ENCODE measurements at regions of chr7 and their contacts with region 1.

Region 1: DNA sequence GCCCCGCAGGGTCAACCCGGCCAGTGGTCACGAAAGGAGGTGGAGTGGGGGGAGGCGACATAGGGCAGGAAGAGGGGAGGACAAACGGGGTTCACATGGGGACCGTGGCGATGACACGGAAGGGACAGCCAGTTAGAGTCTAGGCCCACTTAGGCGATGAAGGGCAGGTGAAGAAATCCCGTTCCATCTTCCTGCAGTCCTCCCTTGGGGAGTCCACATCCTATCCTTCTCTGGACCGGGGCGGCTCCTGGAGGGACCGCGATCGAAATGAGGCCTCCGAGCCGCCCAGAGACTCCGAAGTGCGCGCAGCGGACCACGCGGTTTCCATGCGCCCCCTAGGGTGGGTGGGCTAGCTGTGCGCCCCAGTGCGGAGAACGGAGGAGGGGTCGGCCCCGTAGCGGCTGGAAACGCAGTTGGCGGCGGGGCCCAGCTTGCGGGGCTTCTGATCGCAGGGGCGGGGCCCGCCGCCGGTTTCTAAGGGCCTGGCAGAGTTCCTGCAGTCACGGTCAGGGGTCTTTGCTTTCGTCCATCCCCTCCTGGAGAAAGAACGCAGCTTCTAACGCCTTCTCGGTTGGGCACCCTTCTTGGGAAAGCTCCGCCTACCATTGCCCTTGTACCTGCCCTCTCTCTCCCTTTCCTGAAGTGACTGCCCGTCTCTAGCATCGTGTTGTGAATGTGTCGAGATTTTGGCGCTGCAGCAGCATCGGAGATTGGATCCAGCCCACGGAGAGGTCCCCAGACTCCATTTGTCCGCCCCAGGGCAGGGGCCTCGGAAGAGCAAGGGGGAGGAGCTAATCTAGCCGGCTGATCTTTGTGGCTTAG is 17.9 kb upstream of the TMEM225B start:
- DNase-seq: peak; percentile 62
- ATAC-seq: peak; percentile 83
- H3K4me3 ChIP-seq: peak overlapping the region; percentile 34 to 75 (median 60)
- H3K4me3 Mint-ChIP-seq: peak overlapping the region; percentile 96
- H3K27ac ChIP-seq: no peak overlapping the region
- H3K27ac Mint-ChIP-seq: peak overlapping the region; percentile 87
- H3K4me1 ChIP-seq: peaks cover 7 to 19% of the 10 kb centered on the region in 2 donors
- H3K4me1 Mint-ChIP-seq: peaks cover 27% of the 10 kb centered on the region
- H3K27me3 ChIP-seq: peaks cover 0 to 3% (median 1%) of the 10 kb centered on the region in 4 experiments
- H3K27me3 Mint-ChIP-seq: peaks cover 9% of the 10 kb centered on the region
- CTCF ChIP-seq: peak; percentile 48

Region 2: DNA sequence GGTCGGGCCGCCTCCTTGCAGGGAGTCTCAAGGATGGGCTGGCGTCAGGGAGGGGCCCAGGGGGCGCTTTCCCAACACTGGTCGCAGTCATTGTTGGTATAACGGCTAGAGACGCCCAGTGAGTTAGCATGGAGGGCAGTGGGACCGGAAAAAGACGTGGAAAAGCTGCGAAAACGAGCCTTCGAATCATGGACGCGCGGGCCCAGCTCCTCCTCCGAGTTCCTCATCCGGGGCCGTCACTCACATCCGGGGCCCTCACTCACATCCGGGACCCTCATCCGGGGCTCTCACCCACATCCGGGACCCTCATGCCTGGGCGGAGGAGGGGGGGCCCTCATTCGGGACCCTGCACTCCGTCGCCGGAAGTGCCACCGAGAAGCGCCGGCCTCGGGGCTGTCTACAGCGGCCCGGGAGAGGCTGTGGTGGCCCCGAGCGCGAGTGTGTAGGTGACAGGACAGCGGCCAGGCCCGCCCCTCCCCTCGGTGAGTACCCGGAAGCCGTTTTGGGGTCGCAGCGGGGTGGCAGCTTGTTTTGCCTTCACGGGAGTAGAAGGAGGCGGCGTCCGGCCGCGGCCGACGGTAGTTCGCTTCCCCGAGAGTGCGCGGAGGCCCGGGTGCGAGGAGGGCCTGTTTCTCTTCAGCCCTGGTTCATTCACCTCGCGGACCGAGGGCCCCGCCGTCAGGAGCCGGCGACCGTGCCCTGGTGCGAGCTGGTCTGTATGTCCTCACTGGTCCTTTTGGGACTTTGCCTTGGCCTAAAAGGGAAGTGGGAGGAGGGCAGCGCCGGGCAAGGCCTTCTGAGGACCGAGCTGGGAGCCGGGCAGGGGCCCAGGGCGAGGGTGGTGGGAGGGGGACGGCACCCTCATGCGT is 21.6 kb before region 1 on chr7 and contains the start of gene ZNF655:
- CTCF ChIA-PET with region 1: interaction called, 3 read pairs
- POLR2A ChIA-PET with region 1: interaction called, 10 read pairs
- intact Hi-C with region 1: loop called (anchors 2 kb)
- DNase-seq: peak; percentile 94
- ATAC-seq: peak; percentile 80
- H3K4me3 ChIP-seq: peak within 1 kb of the TSS; percentile 77 to 97 (median 92)
- H3K4me3 Mint-ChIP-seq: peak within 1 kb of the TSS; percentile 98
- H3K27ac ChIP-seq: peak within 1 kb of the TSS; percentile 91 to 98
- H3K27ac Mint-ChIP-seq: peak within 1 kb of the TSS; percentile 98
- H3K4me1 ChIP-seq: peaks cover 19 to 25% of the 10 kb centered on the region in 2 donors
- H3K4me1 Mint-ChIP-seq: peaks cover 42% of the 10 kb centered on the region
- H3K27me3 ChIP-seq: no peaks in the 10 kb centered on the region
- H3K27me3 Mint-ChIP-seq: no peaks in the 10 kb centered on the region
- CTCF ChIP-seq: no peak
- total RNA-seq, gene ZNF655: 150 and 154 TPM in 2 replicates

Region 3: DNA sequence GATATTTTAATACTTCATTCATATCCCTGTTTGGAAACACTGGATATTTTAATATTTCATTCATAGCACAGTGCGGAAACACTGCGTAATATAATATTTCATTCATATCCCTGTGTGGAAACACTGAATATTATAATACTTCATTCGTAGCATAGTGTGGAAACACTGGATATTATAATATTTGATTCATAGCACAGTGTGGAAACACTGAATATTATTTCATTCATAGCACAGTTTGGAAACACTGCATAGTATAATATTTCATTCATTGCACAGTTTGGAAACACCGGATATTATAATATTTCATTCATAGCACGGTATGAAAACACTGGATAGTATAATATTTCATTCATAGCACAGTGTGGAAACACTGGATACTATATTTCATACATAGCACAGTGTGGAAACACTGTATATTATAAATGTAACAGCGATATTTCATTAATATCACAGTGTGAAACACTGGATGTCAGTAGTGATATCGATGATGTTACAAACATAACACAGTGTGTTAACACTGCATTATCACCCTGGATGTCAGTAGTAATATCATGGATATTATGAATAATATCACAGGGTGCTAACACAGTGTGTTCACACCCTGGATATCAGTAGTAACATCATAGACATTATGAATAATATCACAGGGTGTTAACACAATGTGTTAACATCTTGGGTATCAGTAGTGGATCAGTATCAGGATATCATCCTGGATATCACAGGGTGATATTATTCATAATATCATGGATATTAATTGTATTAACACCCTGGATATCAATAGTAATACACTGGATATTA is 15.0 kb after region 1 on chr7:
- CTCF ChIA-PET with region 1: no interaction called
- POLR2A ChIA-PET with region 1: no interaction called
- intact Hi-C with region 1: no loop called
- DNase-seq: no peak
- ATAC-seq: no peak
- H3K4me3 ChIP-seq: no peak overlapping the region
- H3K4me3 Mint-ChIP-seq: no peak overlapping the region
- H3K27ac ChIP-seq: no peak overlapping the region
- H3K27ac Mint-ChIP-seq: no peak overlapping the region
- H3K4me1 ChIP-seq: no peaks in the 10 kb centered on the region
- H3K4me1 Mint-ChIP-seq: no peaks in the 10 kb centered on the region
- H3K27me3 ChIP-seq: no peaks in the 10 kb centered on the region
- H3K27me3 Mint-ChIP-seq: no peaks in the 10 kb centered on the region
- CTCF ChIP-seq: no peak

Region 4: DNA sequence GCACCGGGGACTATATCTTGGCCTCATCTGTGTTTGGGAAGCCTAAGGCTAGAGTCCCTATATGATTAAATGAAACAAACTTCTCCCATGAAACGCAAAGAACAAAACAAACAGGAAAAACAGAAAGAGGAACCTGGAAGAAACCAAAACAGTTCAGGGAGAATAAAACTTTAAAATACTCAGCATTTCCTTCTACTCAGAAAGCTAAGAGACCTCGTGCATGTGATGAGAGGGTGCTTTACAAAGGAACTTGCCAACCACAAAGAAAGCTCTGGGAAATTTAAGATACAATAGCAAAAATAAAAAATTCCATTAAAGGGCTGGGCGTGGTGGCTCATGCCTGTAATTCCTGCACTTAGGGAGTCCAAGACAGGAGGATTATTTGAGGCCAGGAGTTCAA is 800.0 kb after region 1 on chr7:
- CTCF ChIA-PET with region 1: no interaction called
- POLR2A ChIA-PET with region 1: no interaction called
- intact Hi-C with region 1: no loop called
- DNase-seq: no peak
- ATAC-seq: no peak
- H3K4me3 ChIP-seq: no peak overlapping the region
- H3K4me3 Mint-ChIP-seq: no peak overlapping the region
- H3K27ac ChIP-seq: no peak overlapping the region
- H3K27ac Mint-ChIP-seq: no peak overlapping the region
- H3K4me1 ChIP-seq: peaks cover 0 to 7% of the 10 kb centered on the region in 2 donors
- H3K4me1 Mint-ChIP-seq: peaks cover 24% of the 10 kb centered on the region
- H3K27me3 ChIP-seq: no peaks in the 10 kb centered on the region
- H3K27me3 Mint-ChIP-seq: no peaks in the 10 kb centered on the region
- CTCF ChIP-seq: no peak